Activated CD8-positive, alpha-beta T cell treated with anti-CD3 and anti-CD28 coated beads for 36 hours (primary cell): ENCODE measurements at regions of chr14 and their contacts with region 1.

Region 1: GRCh38 chr14:72904840-72905561 is 11.1 kb upstream of the DPF3 start:
- DNase-seq: peak; percentile 72
- ATAC-seq: peak; percentile 74
- H3K4me3 Mint-ChIP-seq: no peak overlapping the region
- H3K27ac Mint-ChIP-seq: no peak overlapping the region
- H3K4me1 Mint-ChIP-seq: no peaks in the 10 kb centered on the region
- H3K27me3 Mint-ChIP-seq: peaks cover 10% of the 10 kb centered on the region
- CTCF ChIP-seq: peak; percentile 95

Region 2: DNA sequence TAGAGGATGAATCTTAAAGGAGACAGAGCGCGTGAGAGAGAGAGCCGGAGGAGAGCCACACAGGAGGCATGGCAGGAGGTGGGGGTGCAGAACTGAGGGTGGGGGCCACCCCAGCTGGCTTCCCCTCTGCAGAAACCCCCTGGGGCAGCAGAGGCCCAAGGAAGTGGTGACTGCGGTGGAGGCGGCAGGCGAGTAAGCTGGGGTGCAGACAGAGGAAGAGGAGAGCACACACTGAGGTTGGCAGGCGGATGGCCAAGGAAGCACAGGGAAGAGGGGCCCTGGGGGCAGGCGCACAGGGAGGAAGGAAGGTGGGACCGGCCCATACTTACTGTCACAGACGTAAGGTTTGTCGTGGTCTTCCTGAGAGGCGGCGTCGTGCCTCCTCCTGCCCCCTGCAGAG is 190.9 kb before region 1 on chr14:
- CTCF ChIA-PET with region 1: interaction called, 4 read pairs
- POLR2A ChIA-PET with region 1: no interaction called
- intact Hi-C with region 1: loop called (anchors 10 kb)
- DNase-seq: peak; percentile 84
- ATAC-seq: peak; percentile 88
- H3K4me3 Mint-ChIP-seq: peak overlapping the region; percentile 0
- H3K27ac Mint-ChIP-seq: peak overlapping the region; percentile 0
- H3K4me1 Mint-ChIP-seq: peaks cover 33% of the 10 kb centered on the region
- H3K27me3 Mint-ChIP-seq: no peaks in the 10 kb centered on the region
- CTCF ChIP-seq: no peak

Region 3: GRCh38 chr14:72801381-72801812 is 103.6 kb before region 1 on chr14:
- CTCF ChIA-PET with region 1: no interaction called
- POLR2A ChIA-PET with region 1: no interaction called
- intact Hi-C with region 1: no loop called
- DNase-seq: peak; percentile 41
- ATAC-seq: peak; percentile 95
- H3K4me3 Mint-ChIP-seq: no peak overlapping the region
- H3K27ac Mint-ChIP-seq: peak overlapping the region; percentile 47
- H3K4me1 Mint-ChIP-seq: peaks cover 8% of the 10 kb centered on the region
- H3K27me3 Mint-ChIP-seq: no peaks in the 10 kb centered on the region
- CTCF ChIP-seq: no peak

Region 4: DNA sequence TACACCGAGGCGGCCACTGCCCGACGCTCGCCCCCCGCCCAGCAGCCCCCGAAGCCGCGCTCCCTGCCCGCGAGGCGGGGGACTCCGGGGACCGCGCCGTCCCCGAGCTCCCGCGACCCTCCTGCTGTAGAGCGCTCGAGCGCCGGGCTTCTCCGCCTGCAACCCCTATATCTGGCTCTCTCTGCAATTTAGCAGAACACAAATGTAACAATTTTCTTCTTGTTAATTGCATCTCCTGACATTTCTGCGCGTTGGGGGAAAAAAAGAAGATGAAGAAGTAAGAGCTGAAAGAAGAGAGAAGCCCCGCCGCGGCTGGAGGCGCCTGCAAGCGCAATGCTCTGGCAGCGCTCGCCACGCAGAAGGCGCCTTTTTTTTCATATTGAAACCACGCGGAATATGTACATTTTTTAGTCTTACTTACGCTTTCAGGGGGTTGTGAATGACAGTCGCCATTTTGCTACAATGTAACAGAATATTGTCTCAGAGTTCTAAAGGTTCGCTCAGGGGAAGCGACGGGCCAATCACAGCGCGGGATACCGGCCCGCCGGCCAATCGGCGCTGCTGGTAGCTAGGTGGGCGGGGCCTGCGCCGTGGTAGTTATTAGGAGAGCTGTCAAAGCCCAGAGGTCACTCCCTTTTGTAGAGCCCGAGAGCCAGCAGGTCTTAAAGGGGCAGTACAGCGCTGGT is 11.2 kb before region 1 on chr14 and contains the start of gene DPF3:
- CTCF ChIA-PET with region 1: interaction called, 13 read pairs
- POLR2A ChIA-PET with region 1: no interaction called
- intact Hi-C with region 1: no loop called
- DNase-seq: peak; percentile 96
- ATAC-seq: peak; percentile 98
- H3K4me3 Mint-ChIP-seq: peak within 1 kb of the TSS; percentile 87
- H3K27ac Mint-ChIP-seq: no peak within 1 kb of the TSS
- H3K4me1 Mint-ChIP-seq: peaks cover 18% of the 10 kb centered on the region
- H3K27me3 Mint-ChIP-seq: peaks cover 55% of the 10 kb centered on the region
- CTCF ChIP-seq: no peak
- total RNA-seq, gene DPF3: 0.13 to 0.54 TPM

Region 5: DNA sequence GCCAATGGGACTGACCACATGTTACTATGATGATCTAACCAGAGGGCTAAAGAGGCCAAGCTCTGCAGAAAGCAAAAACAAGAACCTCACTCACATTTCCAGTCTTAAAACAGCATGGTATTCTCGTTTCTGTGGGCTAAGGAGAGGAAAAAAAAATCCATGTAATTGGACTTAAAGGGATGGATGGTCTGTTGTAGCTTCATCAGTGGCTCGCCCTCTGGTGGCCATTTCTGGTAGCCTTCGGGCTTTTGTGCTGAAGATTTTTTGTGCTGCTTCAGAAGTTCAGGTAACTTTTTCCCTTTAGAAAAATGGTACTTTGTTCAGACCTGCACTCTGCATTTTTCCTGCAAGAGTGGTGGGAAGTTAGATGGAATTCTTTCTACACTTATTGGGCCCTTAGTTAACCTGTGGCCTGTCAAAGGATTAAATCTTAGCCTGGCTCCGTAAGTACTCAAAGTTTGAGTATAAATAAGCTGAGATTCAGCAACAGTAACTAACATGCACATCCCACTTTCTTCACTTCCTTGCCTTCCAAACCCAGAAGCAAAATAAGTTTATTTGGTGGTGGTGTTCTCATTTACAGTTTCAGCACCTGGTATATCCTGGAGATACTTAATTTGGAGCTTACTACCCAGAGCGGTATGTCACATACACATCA is 43.6 kb after region 1 on chr14:
- CTCF ChIA-PET with region 1: interaction called, 20 read pairs
- POLR2A ChIA-PET with region 1: no interaction called
- intact Hi-C with region 1: no loop called
- DNase-seq: peak; percentile 85
- ATAC-seq: no peak
- H3K4me3 Mint-ChIP-seq: no peak overlapping the region
- H3K27ac Mint-ChIP-seq: no peak overlapping the region
- H3K4me1 Mint-ChIP-seq: peaks cover 14% of the 10 kb centered on the region
- H3K27me3 Mint-ChIP-seq: no peaks in the 10 kb centered on the region
- CTCF ChIP-seq: peak; percentile 91